ENCODE measurements at regions of chr6 and their contacts with region 1.

Region 1: GRCh38 chr6:110558575-110558974 is 82.2 kb upstream of the SLC22A16 start:
- DNase-seq: peak in 3 of 10 donors; percentile 26 to 43 (median 35)

Region 2: GRCh38 chr6:110609101-110609500 is 50.5 kb after region 1 on chr6:
- intact Hi-C with region 1: loop called (anchors 2 kb)
- DNase-seq: peak in 6 of 10 donors; percentile 40 to 92 (median 62)

Measured in posterior cingulate gyrus (tissue), 11 donors.